Esophagus muscularis mucosa (tissue), 4 donors: ENCODE measurements at regions of chr3 and their contacts with region 1.

Region 1: GRCh38 chr3:52897130-52898122 is at the start of gene STIMATE:
- DNase-seq: no peak
- H3K4me3 ChIP-seq: peak within 1 kb of the TSS; percentile 73 to 90 (median 78)
- H3K27ac ChIP-seq: peak within 1 kb of the TSS; percentile 69 to 85 (median 76)
- H3K4me1 ChIP-seq: peaks cover 30 to 52% (median 51%) of the 10 kb centered on the region in 4 donors
- H3K27me3 ChIP-seq: no peaks in the 10 kb centered on the region
- CTCF ChIP-seq: peak in 1 of 3 experiments; percentile 15
- EP300 ChIP-seq: no peak
- POLR2A ChIP-seq: no peak
- total RNA-seq, gene STIMATE: 10.4 to 23.6 (median 14.7) TPM

Region 2: GRCh38 chr3:52845691-52846431 is 51.6 kb before region 1 on chr3:
- intact Hi-C with region 1: loop called (anchors 5 kb)
- DNase-seq: no peak
- H3K4me3 ChIP-seq: no peak overlapping the region
- H3K27ac ChIP-seq: peak overlapping the region; percentile 78 to 83 (median 80)
- H3K4me1 ChIP-seq: peaks cover 50 to 83% (median 74%) of the 10 kb centered on the region in 4 donors
- H3K27me3 ChIP-seq: no peaks in the 10 kb centered on the region
- CTCF ChIP-seq: peak; percentile 25 to 64 (median 36)
- EP300 ChIP-seq: no peak
- POLR2A ChIP-seq: no peak